ENCODE measurements at regions of chr7 and their contacts with region 1.

Region 1: DNA sequence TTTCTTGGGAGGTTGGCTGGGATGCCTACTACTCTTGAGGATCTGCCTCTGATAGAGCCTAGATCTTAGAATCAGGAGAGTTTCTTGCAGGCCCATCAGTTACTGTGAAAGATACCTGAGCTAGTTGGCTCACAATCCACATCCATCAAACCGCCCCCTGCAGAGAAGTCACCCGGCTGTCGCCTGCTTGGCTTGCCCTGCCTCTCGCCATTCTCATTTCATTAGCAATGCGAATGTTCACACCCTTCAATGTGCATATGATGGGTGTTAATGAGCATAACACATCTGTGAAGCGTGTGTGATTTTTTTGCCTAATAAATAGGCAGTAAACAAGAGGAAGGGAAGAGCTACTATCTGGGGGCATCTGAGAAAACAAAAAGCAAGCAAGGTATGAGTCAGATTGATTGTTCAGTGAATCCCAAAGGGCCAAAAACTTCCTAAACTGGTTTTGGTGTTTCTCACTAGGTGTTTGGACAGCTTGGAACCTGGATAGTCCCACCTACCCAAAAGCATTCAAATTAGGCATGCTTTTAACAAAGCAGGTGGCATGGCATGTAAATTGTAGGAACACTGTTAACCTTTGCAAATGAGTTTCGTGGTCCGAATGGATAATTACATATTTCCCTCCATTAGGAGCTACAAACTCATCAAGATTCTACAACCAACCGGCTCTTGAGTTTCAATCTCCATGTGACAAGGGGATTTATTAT is 272.3 kb upstream of the C7orf33 start:
- DNase-seq: peak in 1 of 2 experiments; percentile 51
- H3K4me3 ChIP-seq: no peak overlapping the region
- H3K4me3 Mint-ChIP-seq: peak overlapping the region; percentile 28
- H3K27ac Mint-ChIP-seq: peak overlapping the region; percentile 58
- H3K4me1 ChIP-seq: peaks cover 24% of the 10 kb centered on the region
- H3K4me1 Mint-ChIP-seq: peaks cover 7% of the 10 kb centered on the region
- H3K27me3 ChIP-seq: no peaks in the 10 kb centered on the region
- H3K27me3 Mint-ChIP-seq: no peaks in the 10 kb centered on the region
- CTCF ChIP-seq: no peak

Region 2: DNA sequence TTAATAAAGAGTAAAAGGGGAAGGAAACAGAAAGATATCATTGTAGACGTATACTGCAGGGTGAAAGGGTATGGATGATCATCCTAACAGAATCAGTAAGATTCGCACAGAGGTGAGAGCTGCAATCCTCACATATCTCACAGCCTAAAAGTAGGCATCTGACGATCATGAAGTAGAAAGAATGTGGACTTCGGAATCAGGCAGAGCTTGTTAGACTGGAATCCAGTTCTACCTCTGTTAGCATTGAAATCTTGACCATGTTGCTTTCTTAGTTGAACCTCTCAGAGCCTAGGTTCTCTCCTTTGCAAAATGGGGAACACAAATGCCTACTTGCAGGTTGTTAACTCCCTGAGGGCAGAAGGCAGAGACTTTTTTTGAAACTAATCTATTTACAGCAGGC is 47.7 kb before region 1 on chr7:
- CTCF ChIA-PET with region 1: no interaction called
- POLR2A ChIA-PET with region 1: no interaction called
- intact Hi-C with region 1: loop called (anchors 1 kb)
- DNase-seq: peak; percentile 58 to 66
- H3K4me3 ChIP-seq: no peak overlapping the region
- H3K4me3 Mint-ChIP-seq: peak overlapping the region; percentile 49
- H3K27ac Mint-ChIP-seq: peak overlapping the region; percentile 54
- H3K4me1 ChIP-seq: peaks cover 30% of the 10 kb centered on the region
- H3K4me1 Mint-ChIP-seq: peaks cover 26% of the 10 kb centered on the region
- H3K27me3 ChIP-seq: no peaks in the 10 kb centered on the region
- H3K27me3 Mint-ChIP-seq: no peaks in the 10 kb centered on the region
- CTCF ChIP-seq: no peak

Region 3: DNA sequence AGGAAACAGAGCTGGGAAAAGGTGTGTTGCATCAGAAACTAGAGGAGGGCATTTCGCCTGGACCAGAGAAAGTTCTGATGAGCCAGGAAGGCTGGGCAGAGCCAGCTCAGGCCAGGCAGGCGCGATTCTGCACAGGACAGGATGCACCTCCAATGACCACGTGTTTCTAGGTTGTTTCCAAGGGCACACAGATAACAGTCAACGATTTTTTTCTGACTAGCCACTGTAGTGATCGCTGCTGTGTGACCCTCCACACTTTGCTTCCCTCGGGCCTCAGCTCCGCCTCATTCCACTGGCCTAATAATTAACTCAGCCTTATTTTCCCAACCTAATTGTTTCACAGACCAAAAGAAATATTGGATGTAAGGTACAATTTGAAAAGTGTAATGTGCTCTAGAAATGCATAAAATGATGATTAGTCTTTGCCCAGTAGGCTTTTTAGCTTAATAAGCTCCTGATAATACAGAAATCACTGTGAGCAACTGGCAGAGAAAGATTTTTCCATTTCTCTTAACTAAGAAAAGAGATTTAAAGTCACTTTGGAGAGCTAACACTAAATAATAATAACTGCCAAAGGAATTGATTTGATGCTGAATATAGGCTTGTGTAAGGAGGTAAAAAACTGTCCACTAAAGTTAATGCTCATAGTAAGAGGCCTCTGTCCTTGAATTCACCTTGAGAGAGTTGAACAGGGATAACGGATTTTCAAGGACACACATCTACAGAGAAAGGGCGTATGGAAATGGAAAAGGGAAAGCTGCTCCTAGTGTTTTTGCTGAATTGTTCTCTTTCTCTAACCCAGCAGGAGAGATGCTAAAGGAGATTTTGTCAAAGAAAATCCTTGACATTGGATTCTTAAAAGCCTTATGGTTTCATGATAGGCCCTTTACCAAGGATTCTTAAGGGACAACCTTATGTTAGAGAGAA is 18.6 kb before region 1 on chr7:
- CTCF ChIA-PET with region 1: interaction called, 4 read pairs
- POLR2A ChIA-PET with region 1: no interaction called
- intact Hi-C with region 1: loop called (anchors 1 kb)
- DNase-seq: peak; percentile 66 to 79
- H3K4me3 ChIP-seq: no peak overlapping the region
- H3K4me3 Mint-ChIP-seq: peak overlapping the region; percentile 28
- H3K27ac Mint-ChIP-seq: peak overlapping the region; percentile 76
- H3K4me1 ChIP-seq: peaks cover 33% of the 10 kb centered on the region
- H3K4me1 Mint-ChIP-seq: peaks cover 11% of the 10 kb centered on the region
- H3K27me3 ChIP-seq: no peaks in the 10 kb centered on the region
- H3K27me3 Mint-ChIP-seq: no peaks in the 10 kb centered on the region
- CTCF ChIP-seq: no peak

Region 4: DNA sequence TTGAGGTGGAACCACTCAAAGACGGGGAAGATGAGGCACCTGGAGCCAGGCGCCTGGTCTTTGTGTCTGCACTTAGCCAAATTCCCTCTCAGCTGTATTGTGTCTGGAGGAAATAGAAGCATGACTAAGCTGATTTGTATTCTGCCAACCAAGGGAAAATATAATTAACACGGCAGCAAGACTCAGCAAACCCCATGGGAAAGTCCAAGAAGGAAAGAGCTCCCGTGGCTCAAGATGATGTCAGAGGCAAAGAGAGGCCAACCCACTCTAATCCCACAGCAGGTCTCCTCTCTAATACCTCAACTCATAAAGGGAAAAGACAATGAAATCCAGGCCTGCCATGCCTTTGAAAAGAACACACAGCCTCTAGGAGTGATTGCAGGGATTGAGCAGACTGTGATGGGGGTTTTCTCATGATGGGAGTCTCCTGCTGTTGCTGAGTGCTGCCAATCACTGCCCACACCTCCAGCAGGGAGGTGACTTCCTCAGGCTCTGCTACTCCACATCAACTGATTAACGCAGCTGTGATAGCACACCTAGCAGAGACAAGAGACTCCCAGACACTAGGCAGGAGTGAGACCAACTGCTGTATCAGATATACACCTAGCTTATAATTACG is 16.8 kb after region 1 on chr7:
- CTCF ChIA-PET with region 1: interaction called, 3 read pairs
- POLR2A ChIA-PET with region 1: interaction called, 3 read pairs
- intact Hi-C with region 1: loop called (anchors 1 kb)
- DNase-seq: no peak
- H3K4me3 ChIP-seq: no peak overlapping the region
- H3K4me3 Mint-ChIP-seq: no peak overlapping the region
- H3K27ac Mint-ChIP-seq: no peak overlapping the region
- H3K4me1 ChIP-seq: peaks cover 25% of the 10 kb centered on the region
- H3K4me1 Mint-ChIP-seq: peaks cover 27% of the 10 kb centered on the region
- H3K27me3 ChIP-seq: no peaks in the 10 kb centered on the region
- H3K27me3 Mint-ChIP-seq: no peaks in the 10 kb centered on the region
- CTCF ChIP-seq: no peak

Region 5: GRCh38 chr7:148458263-148458662 is 140.0 kb after region 1 on chr7:
- CTCF ChIA-PET with region 1: no interaction called
- POLR2A ChIA-PET with region 1: no interaction called
- intact Hi-C with region 1: loop called (anchors 5 kb)
- DNase-seq: peak in 1 of 2 experiments; percentile 9
- H3K4me3 ChIP-seq: no peak overlapping the region
- H3K4me3 Mint-ChIP-seq: no peak overlapping the region
- H3K27ac Mint-ChIP-seq: peak overlapping the region; percentile 40
- H3K4me1 ChIP-seq: peaks cover 18% of the 10 kb centered on the region
- H3K4me1 Mint-ChIP-seq: peaks cover 15% of the 10 kb centered on the region
- H3K27me3 ChIP-seq: no peaks in the 10 kb centered on the region
- H3K27me3 Mint-ChIP-seq: no peaks in the 10 kb centered on the region
- CTCF ChIP-seq: no peak

Measured in Caco-2 (cell line).